ENCODE measurements at regions of chr10 and their contacts with region 1.

Region 1: DNA sequence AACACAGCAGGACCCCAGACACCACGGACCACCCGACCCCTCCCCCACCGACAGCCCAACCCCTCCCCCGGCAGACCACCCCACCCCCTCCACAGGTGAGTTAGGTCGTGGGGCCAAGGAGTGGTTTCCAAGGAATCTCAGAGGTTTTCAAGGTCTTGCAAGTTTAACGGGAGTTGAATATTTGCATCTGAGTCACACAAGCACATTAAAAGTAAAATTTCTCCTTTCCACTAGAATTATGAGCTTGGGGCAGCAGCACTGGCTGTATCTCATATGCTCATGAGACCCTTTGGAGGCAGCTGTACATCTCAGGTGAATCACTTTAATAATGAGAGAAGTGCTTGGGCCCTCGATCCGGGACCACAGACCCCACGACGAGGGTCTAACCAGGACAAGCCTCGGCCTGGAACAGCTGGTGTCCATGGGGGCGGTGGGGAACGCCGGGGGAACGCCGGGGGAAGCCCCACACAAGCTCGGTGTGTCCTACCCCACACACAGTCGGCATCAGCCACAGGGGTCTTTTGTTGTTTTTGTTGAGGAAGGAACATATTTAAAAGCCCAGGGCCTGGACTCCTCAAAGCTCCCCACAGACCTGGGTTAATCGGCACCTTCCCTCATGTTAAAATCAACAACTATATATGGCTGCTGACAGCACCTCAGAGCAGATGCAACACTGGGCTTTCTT is 130.4 kb downstream of the DIP2C start:
- DNase-seq: no peak
- ATAC-seq: peak; percentile 33
- H3K4me3 ChIP-seq: no peak overlapping the region
- H3K27ac ChIP-seq: no peak overlapping the region
- H3K4me1 ChIP-seq: peaks cover 9% of the 10 kb centered on the region; the same call in 1 of the 2 replicates
- H3K27me3 ChIP-seq: no peaks in the 10 kb centered on the region
- CTCF ChIP-seq: no peak

Region 2: GRCh38 chr10:454860-455259 is 104.2 kb before region 1 on chr10:
- CTCF ChIA-PET with region 1: no interaction called
- POLR2A ChIA-PET with region 1: no interaction called
- intact Hi-C with region 1: no loop called
- DNase-seq: peak; percentile 84
- ATAC-seq: peak; percentile 98
- H3K4me3 ChIP-seq: no peak overlapping the region
- H3K27ac ChIP-seq: no peak overlapping the region
- H3K4me1 ChIP-seq: peaks cover 7% of the 10 kb centered on the region
- H3K27me3 ChIP-seq: no peaks in the 10 kb centered on the region
- CTCF ChIP-seq: no peak

Region 3: GRCh38 chr10:484441-484924 is 74.5 kb before region 1 on chr10:
- CTCF ChIA-PET with region 1: interaction called, 15 read pairs
- POLR2A ChIA-PET with region 1: no interaction called
- intact Hi-C with region 1: no loop called
- DNase-seq: peak; percentile 36
- ATAC-seq: peak; percentile 82
- H3K4me3 ChIP-seq: peak overlapping the region; percentile 77
- H3K27ac ChIP-seq: no peak overlapping the region
- H3K4me1 ChIP-seq: no peaks in the 10 kb centered on the region
- H3K27me3 ChIP-seq: no peaks in the 10 kb centered on the region
- CTCF ChIP-seq: no peak

Region 4: DNA sequence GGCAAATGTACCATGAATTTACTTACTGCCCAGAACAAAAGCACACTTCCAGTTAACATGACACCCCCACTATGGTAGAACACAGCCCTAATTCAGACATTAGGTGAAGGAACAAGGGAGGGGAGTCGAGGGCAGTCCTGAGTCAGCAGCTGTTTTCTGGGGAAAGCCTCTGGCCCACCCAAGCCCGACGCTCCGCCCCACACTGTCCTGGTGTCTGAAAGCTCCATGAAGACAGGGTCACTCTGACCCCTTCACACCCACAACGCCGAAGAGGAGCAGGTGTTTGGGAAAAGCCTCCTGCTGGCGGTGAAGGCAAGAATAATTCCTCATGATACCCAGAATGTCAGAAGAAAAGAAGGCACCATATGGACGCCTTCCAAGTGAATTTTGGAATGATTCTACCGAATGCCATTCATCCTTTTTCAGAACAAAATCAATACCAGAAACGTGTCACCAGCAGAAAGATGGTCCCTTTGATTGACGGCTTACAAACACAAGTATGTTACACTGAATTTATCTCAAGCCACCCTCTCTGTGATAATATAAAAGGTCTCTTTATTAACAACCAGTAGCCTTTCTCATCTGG is 41.7 kb before region 1 on chr10:
- CTCF ChIA-PET with region 1: interaction called, 10 read pairs
- POLR2A ChIA-PET with region 1: interaction called, 12 read pairs
- intact Hi-C with region 1: no loop called
- DNase-seq: no peak
- ATAC-seq: no peak
- H3K4me3 ChIP-seq: no peak overlapping the region
- H3K27ac ChIP-seq: no peak overlapping the region
- H3K4me1 ChIP-seq: no peaks in the 10 kb centered on the region
- H3K27me3 ChIP-seq: no peaks in the 10 kb centered on the region
- CTCF ChIP-seq: no peak

Region 5: DNA sequence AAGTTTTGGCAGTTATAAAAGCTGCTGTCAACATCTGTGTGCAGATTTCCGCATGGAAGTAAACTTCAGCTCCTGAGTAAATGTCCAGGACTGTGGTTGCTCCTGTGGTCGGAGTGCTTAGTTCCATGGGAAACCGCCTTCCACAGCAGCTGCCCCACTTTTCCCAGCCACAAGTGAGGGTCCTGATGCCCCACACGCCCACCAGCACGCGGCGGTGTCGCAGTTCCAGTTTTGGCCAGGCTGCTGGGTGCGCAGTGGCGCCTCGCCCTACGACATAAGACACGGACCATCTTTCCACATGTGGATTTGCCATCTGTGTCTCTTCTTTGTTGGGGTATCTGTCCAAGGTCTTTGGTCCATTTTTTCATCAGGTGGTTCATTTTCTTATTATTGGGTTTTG is 36.7 kb before region 1 on chr10:
- CTCF ChIA-PET with region 1: interaction called, 10 read pairs
- POLR2A ChIA-PET with region 1: interaction called, 12 read pairs
- intact Hi-C with region 1: no loop called
- DNase-seq: no peak
- ATAC-seq: no peak
- H3K4me3 ChIP-seq: no peak overlapping the region
- H3K27ac ChIP-seq: no peak overlapping the region
- H3K4me1 ChIP-seq: no peaks in the 10 kb centered on the region
- H3K27me3 ChIP-seq: no peaks in the 10 kb centered on the region
- CTCF ChIP-seq: no peak

Measured in PC-3 (cell line).